Transverse colon (tissue), 4 donors: ENCODE measurements at regions of chr21 and their contacts with region 1.

Region 1: DNA sequence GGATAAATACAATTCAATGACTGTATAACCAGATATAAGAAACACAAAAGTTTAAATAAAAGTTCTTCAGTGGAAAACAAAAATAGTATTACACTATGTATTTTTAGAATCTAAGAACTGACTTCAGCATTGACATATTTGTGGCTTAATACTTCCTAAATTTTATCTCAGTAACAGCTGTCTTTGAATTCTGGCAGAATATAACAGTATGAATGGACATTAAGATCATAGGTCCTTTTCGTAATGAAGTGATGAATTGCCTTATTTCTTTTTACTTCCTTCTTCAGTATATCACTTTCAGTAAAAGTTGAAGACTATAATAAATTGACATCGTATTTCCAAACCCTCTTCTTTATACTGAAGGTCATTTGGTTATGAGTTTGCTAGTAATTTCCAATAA is 1030.0 kb downstream of the MRPL39 start:
- DNase-seq: no peak
- H3K4me3 ChIP-seq: no peak overlapping the region
- H3K27ac ChIP-seq: no peak overlapping the region
- H3K4me1 ChIP-seq: no peaks in the 10 kb centered on the region
- H3K27me3 ChIP-seq: no peaks in the 10 kb centered on the region
- CTCF ChIP-seq: no peak
- EP300 ChIP-seq: no peak
- POLR2A ChIP-seq: no peak

Region 2: DNA sequence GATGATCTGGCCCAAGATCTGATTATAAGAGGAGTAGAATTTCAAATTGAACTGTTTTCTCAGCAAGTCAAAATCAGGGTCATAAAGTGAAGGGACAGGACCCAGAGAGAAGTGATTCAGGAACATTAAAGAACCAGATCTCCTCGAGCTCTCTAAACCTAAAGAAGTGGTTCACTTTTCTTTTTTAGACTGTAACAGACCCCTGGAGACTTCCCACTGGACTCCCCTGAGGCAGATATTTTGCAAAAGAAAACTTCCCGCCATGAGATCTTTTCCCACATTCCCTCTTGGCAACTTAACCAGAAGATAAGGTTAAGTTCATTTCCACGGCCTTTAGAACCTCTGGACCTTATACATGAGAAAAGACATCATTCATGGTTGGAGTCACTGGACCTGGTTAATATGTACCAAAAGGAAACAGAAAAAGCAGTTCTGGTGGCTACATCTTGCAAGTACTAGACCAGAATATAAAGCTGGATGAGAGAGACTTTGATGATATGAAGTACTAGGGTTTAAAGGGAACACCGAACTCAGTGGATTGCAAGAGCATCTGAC is 31.4 kb before region 1 on chr21:
- in situ Hi-C with region 1: no loop called
- intact Hi-C with region 1: loop called (anchors 1 kb)
- DNase-seq: no peak
- H3K4me3 ChIP-seq: no peak overlapping the region
- H3K27ac ChIP-seq: no peak overlapping the region
- H3K4me1 ChIP-seq: no peaks in the 10 kb centered on the region
- H3K27me3 ChIP-seq: no peaks in the 10 kb centered on the region
- CTCF ChIP-seq: no peak
- EP300 ChIP-seq: no peak
- POLR2A ChIP-seq: no peak